Activated CD4-positive, alpha-beta memory T cell treated with anti-CD3 and anti-CD28 coated beads for 36 hours (primary cell): ENCODE measurements at regions of chr13 and their contacts with region 1.

Region 1: GRCh38 chr13:42392716-42393572 is 121.0 kb downstream of the AKAP11 start:
- DNase-seq: peak; percentile 68
- H3K4me3 Mint-ChIP-seq: peak overlapping the region; percentile 96
- H3K27ac Mint-ChIP-seq: peak overlapping the region; percentile 100
- H3K4me1 Mint-ChIP-seq: peaks cover 79% of the 10 kb centered on the region
- H3K27me3 Mint-ChIP-seq: no peaks in the 10 kb centered on the region

Region 2: GRCh38 chr13:41465241-41465847 is 927.6 kb before region 1 on chr13:
- CTCF ChIA-PET with region 1: no interaction called
- POLR2A ChIA-PET with region 1: no interaction called
- intact Hi-C with region 1: loop called (anchors 10 kb)
- DNase-seq: peak; percentile 96
- H3K4me3 Mint-ChIP-seq: peak overlapping the region; percentile 66
- H3K27ac Mint-ChIP-seq: peak overlapping the region; percentile 97
- H3K4me1 Mint-ChIP-seq: peaks cover 92% of the 10 kb centered on the region
- H3K27me3 Mint-ChIP-seq: no peaks in the 10 kb centered on the region

Region 3: GRCh38 chr13:42039946-42040729 is 352.8 kb before region 1 on chr13:
- CTCF ChIA-PET with region 1: no interaction called
- POLR2A ChIA-PET with region 1: no interaction called
- intact Hi-C with region 1: loop called (anchors 10 kb)
- DNase-seq: peak; percentile 91
- H3K4me3 Mint-ChIP-seq: peak overlapping the region; percentile 81
- H3K27ac Mint-ChIP-seq: peak overlapping the region; percentile 68
- H3K4me1 Mint-ChIP-seq: peaks cover 18% of the 10 kb centered on the region
- H3K27me3 Mint-ChIP-seq: peaks cover 5% of the 10 kb centered on the region

Region 4: DNA sequence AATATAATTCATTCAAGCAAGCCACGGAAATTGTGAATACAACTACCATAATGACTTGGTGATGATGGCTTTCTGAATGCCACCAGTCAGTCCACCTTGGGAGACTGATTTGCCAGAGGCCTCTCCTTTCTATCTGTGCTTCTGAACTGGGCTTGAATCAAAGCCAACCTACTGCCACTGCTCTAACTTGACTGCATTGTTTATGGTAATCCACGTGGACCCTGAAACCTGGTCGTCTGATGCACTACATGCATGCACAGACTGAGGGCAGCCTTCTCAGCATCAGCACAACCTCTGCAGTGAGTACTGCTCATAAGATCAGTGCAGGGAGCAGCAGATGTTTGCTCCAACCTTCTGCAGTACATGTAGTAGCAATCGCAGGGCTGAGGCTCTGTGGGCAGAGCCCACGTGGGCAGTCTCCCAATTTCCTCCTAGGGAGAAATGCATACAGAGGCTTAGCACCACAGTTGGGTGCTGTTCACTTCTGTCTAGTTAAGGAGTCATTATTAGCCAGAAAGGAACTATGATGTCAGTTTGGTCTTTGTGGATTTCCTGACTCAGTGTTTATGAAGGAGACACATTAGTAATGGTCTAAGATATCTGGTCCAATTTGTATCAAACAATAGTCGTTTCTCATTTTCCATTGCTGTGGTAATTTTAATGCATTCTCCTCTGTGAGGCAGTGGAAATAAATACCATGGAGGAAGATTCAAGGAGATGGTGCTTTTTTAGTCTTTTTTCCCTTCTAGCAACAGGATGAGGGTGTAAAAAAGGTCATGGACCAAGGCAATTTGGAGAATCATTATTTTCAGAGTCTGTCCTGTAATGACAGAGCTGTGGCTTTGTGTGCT is 38.5 kb before region 1 on chr13:
- CTCF ChIA-PET with region 1: interaction called, 6 read pairs
- POLR2A ChIA-PET with region 1: interaction called, 140 read pairs
- intact Hi-C with region 1: loop called (anchors 1 kb)
- DNase-seq: peak; percentile 66
- H3K4me3 Mint-ChIP-seq: peak overlapping the region; percentile 54
- H3K27ac Mint-ChIP-seq: peak overlapping the region; percentile 98
- H3K4me1 Mint-ChIP-seq: peaks cover 70% of the 10 kb centered on the region
- H3K27me3 Mint-ChIP-seq: no peaks in the 10 kb centered on the region

Region 5: DNA sequence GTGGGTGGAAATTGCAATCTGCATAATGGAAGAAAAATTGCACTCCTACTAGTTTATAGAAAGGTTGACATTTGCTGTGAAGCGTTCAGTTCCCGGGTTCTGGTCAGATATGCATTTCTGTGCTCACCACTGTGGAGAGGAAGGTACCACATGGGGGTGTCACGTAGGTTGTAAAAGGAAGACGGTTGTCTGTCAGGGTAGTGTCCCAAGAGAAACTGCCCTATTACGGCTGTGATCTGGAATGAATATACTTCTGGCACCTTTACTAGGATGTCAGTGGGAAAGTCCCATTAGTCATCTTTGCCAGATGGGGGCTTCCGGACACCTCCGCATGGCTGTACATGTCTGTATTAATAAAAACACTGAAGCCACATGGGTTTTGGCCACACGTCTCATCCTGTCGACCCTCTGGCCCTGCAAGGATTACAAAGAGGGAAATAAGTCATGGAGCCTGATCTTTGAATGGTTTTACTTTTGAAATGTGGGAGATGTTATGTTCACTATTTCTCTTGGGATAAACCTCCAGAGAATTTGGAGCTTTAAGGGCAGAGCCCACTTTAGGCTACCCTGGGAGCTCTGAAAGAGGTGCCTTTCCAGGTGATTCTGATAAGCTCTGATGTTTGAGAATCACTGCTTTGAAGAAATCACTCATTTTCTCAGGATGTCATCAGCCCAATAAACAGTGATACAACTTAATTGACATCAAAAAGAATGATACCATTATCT is 12.9 kb after region 1 on chr13:
- CTCF ChIA-PET with region 1: interaction called, 13 read pairs
- POLR2A ChIA-PET with region 1: interaction called, 82 read pairs
- intact Hi-C with region 1: loop called (anchors 1 kb)
- DNase-seq: peak; percentile 89
- H3K4me3 Mint-ChIP-seq: peak overlapping the region; percentile 59
- H3K27ac Mint-ChIP-seq: peak overlapping the region; percentile 93
- H3K4me1 Mint-ChIP-seq: peaks cover 75% of the 10 kb centered on the region
- H3K27me3 Mint-ChIP-seq: no peaks in the 10 kb centered on the region

Region 6: GRCh38 chr13:43041369-43041921 is 648.5 kb after region 1 on chr13:
- CTCF ChIA-PET with region 1: no interaction called
- POLR2A ChIA-PET with region 1: no interaction called
- intact Hi-C with region 1: loop called (anchors 10 kb)
- DNase-seq: no peak
- H3K4me3 Mint-ChIP-seq: no peak overlapping the region
- H3K27ac Mint-ChIP-seq: no peak overlapping the region
- H3K4me1 Mint-ChIP-seq: peaks cover 62% of the 10 kb centered on the region
- H3K27me3 Mint-ChIP-seq: no peaks in the 10 kb centered on the region